PC-9 (cell line): ENCODE measurements at regions of chr2 and their contacts with region 1.

Region 1: GRCh38 chr2:170873035-170873692 is 55.9 kb upstream of the GORASP2 start:
- DNase-seq: peak; percentile 52 to 77
- H3K4me3 ChIP-seq: peak overlapping the region; percentile 18; the same call in 1 of the 2 replicates
- H3K27ac ChIP-seq: no peak overlapping the region
- H3K4me1 ChIP-seq: no peaks in the 10 kb centered on the region
- H3K27me3 ChIP-seq: peaks cover 3% of the 10 kb centered on the region
- CTCF ChIP-seq: peak; percentile 93

Region 2: GRCh38 chr2:170369894-170370293 is 503.3 kb before region 1 on chr2:
- CTCF ChIA-PET with region 1: no interaction called
- POLR2A ChIA-PET with region 1: no interaction called
- intact Hi-C with region 1: loop called (anchors 10 kb)
- DNase-seq: no peak
- H3K4me3 ChIP-seq: no peak overlapping the region
- H3K27ac ChIP-seq: no peak overlapping the region
- H3K4me1 ChIP-seq: peaks cover 22% of the 10 kb centered on the region
- H3K27me3 ChIP-seq: no peaks in the 10 kb centered on the region
- CTCF ChIP-seq: peak; percentile 67

Region 3: DNA sequence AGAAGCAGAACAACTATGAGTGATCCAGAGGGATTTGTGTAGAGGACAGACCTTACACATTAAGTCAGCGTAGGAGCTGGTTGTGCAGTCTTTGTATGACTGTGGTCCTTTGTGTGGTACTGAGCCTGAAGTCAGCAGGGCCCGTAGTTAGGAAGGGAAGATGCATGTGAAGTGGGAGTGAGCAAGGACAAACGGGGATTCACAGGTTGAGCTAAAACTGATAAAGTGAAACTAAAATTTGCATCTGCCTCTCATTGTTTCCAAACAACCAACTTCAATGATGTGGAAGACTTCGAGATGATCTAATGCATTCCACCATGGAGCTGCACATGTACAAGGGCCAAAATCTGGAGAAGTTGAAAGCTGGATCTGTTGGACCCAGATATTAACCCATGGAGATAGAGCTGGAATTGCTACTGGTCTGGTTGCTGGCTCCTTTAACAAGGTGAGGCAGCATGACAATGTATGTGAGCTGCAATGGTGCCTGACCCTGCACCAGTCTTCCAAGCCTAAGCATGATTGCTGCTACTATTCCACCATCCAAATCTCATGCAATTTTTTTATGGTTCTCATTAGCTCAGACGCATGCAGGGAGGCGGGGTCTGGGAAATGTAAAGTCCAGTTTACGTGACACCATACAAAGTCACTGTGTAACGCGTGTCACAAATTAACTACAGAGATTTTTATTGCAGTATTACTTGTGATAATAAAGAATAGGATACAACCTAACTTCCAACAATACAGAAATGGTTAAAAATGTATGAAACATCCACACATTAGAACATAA is 637.0 kb after region 1 on chr2:
- CTCF ChIA-PET with region 1: no interaction called
- POLR2A ChIA-PET with region 1: no interaction called
- intact Hi-C with region 1: no loop called
- DNase-seq: peak in 1 of 2 experiments; percentile 30
- H3K4me3 ChIP-seq: no peak overlapping the region
- H3K27ac ChIP-seq: no peak overlapping the region
- H3K4me1 ChIP-seq: no peaks in the 10 kb centered on the region
- H3K27me3 ChIP-seq: no peaks in the 10 kb centered on the region
- CTCF ChIP-seq: no peak